ENCODE measurements at regions of chr11 and their contacts with region 1.

Region 1: DNA sequence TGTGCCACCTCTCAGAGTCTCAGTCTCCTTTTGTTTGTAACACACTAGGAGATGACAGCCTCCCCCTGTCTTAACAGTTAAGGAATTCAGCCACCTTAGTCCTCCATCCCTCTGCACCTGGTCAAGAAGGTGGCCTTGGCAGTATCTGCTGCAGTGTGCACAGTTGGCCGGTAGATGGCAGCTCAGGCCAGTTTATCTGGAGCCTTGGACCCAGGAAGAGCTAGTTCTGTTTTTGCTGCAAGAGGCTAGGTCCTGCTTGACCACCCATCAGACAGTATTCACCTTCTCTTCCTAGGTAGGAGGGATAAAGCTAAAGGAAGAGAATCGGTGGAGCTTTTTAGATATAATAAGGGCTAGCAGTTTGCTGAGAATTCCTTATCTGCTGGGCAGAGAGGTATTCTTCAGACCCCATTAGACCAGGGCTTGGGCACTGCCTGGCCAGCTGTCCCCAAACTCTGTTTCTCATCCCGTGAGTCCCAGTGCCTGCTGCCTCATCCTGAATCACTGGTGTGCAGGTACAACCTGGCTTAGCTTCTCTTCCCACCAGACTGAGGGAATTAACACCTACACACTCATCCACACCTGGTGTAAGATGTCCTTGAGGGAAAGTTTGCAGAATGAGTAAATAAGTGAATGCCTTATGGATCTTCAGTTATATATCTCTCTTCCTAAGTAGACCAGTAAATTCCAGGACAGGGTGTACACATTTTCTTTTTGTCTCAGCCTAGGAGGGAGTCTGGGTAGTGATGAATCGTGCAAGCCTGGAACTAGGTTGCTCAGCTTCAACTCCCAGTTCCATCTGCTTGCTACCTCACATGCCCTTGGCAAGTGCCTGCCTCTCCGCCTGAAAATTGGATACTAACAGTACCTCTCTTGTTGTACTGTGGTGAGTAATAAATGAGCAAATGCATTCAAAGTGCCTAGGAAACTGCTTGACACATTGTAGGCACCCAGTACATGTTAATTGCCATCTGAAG is 70.8 kb upstream of the NARS2 start:
- DNase-seq: peak; percentile 35
- H3K4me3 Mint-ChIP-seq: no peak overlapping the region
- H3K27ac Mint-ChIP-seq: peak overlapping the region; percentile 69
- H3K4me1 Mint-ChIP-seq: peaks cover 35% of the 10 kb centered on the region
- H3K27me3 Mint-ChIP-seq: no peaks in the 10 kb centered on the region

Region 2: DNA sequence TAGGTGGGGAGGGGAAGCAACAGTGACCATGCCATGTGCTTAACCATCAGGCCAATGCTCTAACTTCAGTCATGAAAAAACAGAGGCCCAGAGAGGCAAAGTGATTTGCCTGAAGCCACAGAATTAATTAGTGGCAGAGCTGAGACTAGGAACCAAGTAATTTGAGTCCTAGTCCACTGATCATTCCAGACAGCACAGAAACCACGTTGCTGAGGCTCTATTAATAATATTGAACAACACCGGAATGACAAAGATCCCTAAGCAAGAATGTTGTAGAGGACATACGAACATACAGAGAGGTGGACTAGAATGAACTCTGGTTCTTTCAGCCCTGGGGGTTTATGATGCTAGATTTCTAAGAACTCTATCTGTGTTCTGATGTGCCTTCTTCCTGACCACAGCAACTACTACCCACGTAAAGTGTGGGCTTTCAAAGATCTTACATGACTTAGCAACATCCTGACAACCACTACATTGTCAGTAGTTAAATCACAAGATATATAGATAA is 320.2 kb before region 1 on chr11:
- intact Hi-C with region 1: loop called (anchors 5 kb)
- DNase-seq: peak; percentile 28
- H3K4me3 Mint-ChIP-seq: peak overlapping the region; percentile 56
- H3K27ac Mint-ChIP-seq: peak overlapping the region; percentile 86
- H3K4me1 Mint-ChIP-seq: peaks cover 78% of the 10 kb centered on the region
- H3K27me3 Mint-ChIP-seq: no peaks in the 10 kb centered on the region

Region 3: GRCh38 chr11:78465169-78465942 is 180.2 kb before region 1 on chr11:
- intact Hi-C with region 1: loop called (anchors 2 kb)
- DNase-seq: peak; percentile 59
- H3K4me3 Mint-ChIP-seq: peak overlapping the region; percentile 73
- H3K27ac Mint-ChIP-seq: peak overlapping the region; percentile 92
- H3K4me1 Mint-ChIP-seq: peaks cover 45% of the 10 kb centered on the region
- H3K27me3 Mint-ChIP-seq: no peaks in the 10 kb centered on the region

Region 4: GRCh38 chr11:78715639-78716311 is 70.3 kb after region 1 on chr11:
- intact Hi-C with region 1: loop called (anchors 1 kb)
- DNase-seq: peak; percentile 14
- H3K4me3 Mint-ChIP-seq: no peak overlapping the region
- H3K27ac Mint-ChIP-seq: no peak overlapping the region
- H3K4me1 Mint-ChIP-seq: no peaks in the 10 kb centered on the region
- H3K27me3 Mint-ChIP-seq: peaks cover 2% of the 10 kb centered on the region

Region 5: GRCh38 chr11:79100093-79100910 is 454.8 kb after region 1 on chr11:
- intact Hi-C with region 1: loop called (anchors 1 kb)
- DNase-seq: no peak
- H3K4me3 Mint-ChIP-seq: no peak overlapping the region
- H3K27ac Mint-ChIP-seq: no peak overlapping the region
- H3K4me1 Mint-ChIP-seq: no peaks in the 10 kb centered on the region
- H3K27me3 Mint-ChIP-seq: peaks cover 5% of the 10 kb centered on the region

Measured in activated T-helper 1 cell treated with anti-CD3 and anti-CD28 coated beads, Interleukin-12 subunit alpha, Interleukin-12 subunit beta, Interleukin-2, Interleukin-4 antibody, amounts not matched to agents 30 ng/mL and 10 ng/mL and 1 ng/mL, durations not matched to agents 14 hours and 24 hours and 36 hours (primary cell).